Common myeloid progenitor, CD34-positive (primary cell): ENCODE measurements at regions of chr6 and their contacts with region 1.

Region 1: GRCh38 chr6:31597006-31597405 is 4.2 kb upstream of the NCR3 start:
- DNase-seq: peak; percentile 77 to 84 (median 78)
- H3K4me3 ChIP-seq: no peak overlapping the region
- H3K27ac ChIP-seq: no peak overlapping the region
- H3K4me1 ChIP-seq: peaks cover 0 to 40% (median 21%) of the 10 kb centered on the region in 4 experiments
- H3K27me3 ChIP-seq: no peaks in the 10 kb centered on the region

Region 2: DNA sequence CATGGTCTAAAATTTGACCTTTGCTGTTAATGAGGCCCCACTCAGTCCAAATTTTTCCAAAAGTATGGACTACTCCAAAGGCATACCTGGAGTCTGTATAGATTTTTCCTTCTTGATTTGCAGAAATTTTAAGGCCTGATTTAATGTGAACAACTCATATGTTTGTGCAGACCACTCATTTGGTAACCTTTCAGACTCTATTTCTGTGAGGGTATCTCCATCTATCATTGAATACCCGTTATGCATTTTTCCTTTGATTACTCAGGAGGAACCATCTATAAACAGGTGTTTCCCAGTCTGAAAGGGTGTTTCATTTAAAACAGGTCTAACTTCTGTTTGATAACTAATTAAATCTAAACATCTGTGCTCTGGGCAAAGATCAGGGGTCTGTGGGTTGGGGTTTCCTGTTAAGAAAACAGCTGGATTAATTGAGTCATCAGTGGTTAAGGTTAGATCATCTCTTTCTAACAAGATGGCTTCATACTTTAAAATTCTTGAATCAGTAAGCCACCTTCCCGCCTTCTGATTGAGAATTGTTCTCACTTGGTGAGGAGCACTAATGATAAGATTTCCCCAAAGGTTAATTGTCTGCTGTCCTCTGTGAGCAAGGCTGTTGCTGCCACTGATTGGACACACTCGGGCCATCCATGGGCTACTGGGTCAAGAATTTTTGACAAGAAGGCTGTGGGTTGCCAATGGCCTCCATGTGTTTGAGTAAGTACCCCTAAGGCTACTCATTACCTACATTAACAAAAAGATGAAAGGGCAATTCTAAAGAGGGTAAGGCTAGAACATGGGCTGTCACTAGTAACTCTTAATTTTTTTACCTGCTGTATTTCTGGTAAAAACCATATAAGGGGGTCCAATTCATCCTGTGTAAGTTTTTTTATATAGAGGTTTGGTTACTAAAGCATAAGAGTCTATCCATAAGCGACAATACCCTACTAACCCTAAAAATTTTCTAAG is 264.1 kb before region 1 on chr6:
- CTCF ChIA-PET with region 1: no interaction called
- POLR2A ChIA-PET with region 1: no interaction called
- DNase-seq: peak; percentile 63 to 96 (median 64)
- H3K4me3 ChIP-seq: no peak overlapping the region
- H3K27ac ChIP-seq: no peak overlapping the region
- H3K4me1 ChIP-seq: peaks cover 0 to 9% (median 2%) of the 10 kb centered on the region in 4 experiments
- H3K27me3 ChIP-seq: no peaks in the 10 kb centered on the region

Region 3: GRCh38 chr6:31541658-31542521 is 55.1 kb before region 1 on chr6 and contains the start of gene DDX39B:
- CTCF ChIA-PET with region 1: interaction called, 483 read pairs
- POLR2A ChIA-PET with region 1: no interaction called
- DNase-seq: peak; percentile 98 to 99 (median 99)
- H3K4me3 ChIP-seq: peak within 1 kb of the TSS; percentile 66 to 97 (median 91)
- H3K27ac ChIP-seq: peak within 1 kb of the TSS; percentile 99 to 100
- H3K4me1 ChIP-seq: peaks cover 17 to 47% (median 40%) of the 10 kb centered on the region in 4 experiments
- H3K27me3 ChIP-seq: no peaks in the 10 kb centered on the region

Region 4: GRCh38 chr6:31546962-31547726 is 49.9 kb before region 1 on chr6 and contains the start of gene NFKBIL1:
- CTCF ChIA-PET with region 1: interaction called, 483 read pairs
- POLR2A ChIA-PET with region 1: interaction called, 10 read pairs
- DNase-seq: peak; percentile 90 to 97 (median 91)
- H3K4me3 ChIP-seq: peak within 1 kb of the TSS in 6 of 7 experiments; percentile 60 to 81 (median 72)
- H3K27ac ChIP-seq: peak within 1 kb of the TSS; percentile 74 to 91
- H3K4me1 ChIP-seq: peaks cover 9 to 49% (median 31%) of the 10 kb centered on the region in 4 experiments
- H3K27me3 ChIP-seq: no peaks in the 10 kb centered on the region

Region 5: DNA sequence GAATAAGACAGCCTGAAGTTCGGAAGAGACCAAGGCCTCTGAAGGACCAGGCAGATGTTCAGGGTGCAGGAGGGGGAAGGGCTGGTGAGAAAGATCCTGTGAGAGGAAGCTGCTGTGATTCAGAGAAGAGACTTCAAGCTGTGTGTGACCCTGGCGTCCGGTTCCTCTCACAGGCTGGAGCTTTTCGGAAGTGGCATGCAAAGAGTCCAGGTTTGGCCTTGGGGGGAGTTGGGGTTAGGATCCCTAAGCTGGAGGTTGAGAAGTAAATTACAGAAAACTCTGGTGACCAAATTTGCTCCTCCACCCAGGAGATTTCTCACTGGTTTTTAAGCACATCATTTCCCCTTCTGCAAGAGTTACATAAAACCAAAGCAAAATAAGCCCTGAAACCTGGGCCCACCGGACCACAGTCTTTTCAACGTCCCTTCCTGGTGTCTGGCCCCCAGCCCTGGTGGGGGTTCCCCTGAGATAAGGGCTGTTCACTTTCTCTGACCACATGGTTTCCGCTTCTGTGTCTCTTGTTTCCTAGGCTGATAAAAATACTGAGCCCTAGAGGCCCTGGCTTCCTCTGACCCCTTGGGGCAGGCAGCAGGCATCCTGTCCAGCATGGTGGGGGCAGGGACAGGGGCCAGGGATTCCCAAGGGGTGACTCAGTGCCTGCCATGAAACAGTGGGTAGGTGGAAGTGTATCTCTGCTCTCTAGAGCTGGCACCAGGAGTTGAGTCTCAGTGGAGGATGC is 36.9 kb before region 1 on chr6:
- CTCF ChIA-PET with region 1: interaction called, 127 read pairs
- POLR2A ChIA-PET with region 1: no interaction called
- DNase-seq: peak; percentile 58 to 91 (median 87)
- H3K4me3 ChIP-seq: peak overlapping the region; percentile 16 to 64 (median 41)
- H3K27ac ChIP-seq: peak overlapping the region in 1 of 2 experiments; percentile 69
- H3K4me1 ChIP-seq: peaks cover 30 to 83% (median 62%) of the 10 kb centered on the region in 4 experiments
- H3K27me3 ChIP-seq: no peaks in the 10 kb centered on the region

Region 6: GRCh38 chr6:31568537-31568961 is 28.5 kb before region 1 on chr6:
- CTCF ChIA-PET with region 1: interaction called, 605 read pairs
- POLR2A ChIA-PET with region 1: no interaction called
- DNase-seq: peak in 2 of 3 donors; percentile 63 to 66
- H3K4me3 ChIP-seq: no peak overlapping the region
- H3K27ac ChIP-seq: no peak overlapping the region
- H3K4me1 ChIP-seq: peaks cover 2 to 35% (median 10%) of the 10 kb centered on the region in 4 experiments
- H3K27me3 ChIP-seq: no peaks in the 10 kb centered on the region

Region 7: GRCh38 chr6:31580807-31581433 is 16.1 kb before region 1 on chr6:
- CTCF ChIA-PET with region 1: interaction called, 605 read pairs
- POLR2A ChIA-PET with region 1: interaction called, 8 read pairs
- DNase-seq: peak; percentile 81 to 86 (median 85)
- H3K4me3 ChIP-seq: peak overlapping the region; percentile 85 to 96 (median 91)
- H3K27ac ChIP-seq: peak overlapping the region; percentile 46 to 83
- H3K4me1 ChIP-seq: peaks cover 12 to 65% (median 57%) of the 10 kb centered on the region in 4 experiments
- H3K27me3 ChIP-seq: no peaks in the 10 kb centered on the region

Region 8: DNA sequence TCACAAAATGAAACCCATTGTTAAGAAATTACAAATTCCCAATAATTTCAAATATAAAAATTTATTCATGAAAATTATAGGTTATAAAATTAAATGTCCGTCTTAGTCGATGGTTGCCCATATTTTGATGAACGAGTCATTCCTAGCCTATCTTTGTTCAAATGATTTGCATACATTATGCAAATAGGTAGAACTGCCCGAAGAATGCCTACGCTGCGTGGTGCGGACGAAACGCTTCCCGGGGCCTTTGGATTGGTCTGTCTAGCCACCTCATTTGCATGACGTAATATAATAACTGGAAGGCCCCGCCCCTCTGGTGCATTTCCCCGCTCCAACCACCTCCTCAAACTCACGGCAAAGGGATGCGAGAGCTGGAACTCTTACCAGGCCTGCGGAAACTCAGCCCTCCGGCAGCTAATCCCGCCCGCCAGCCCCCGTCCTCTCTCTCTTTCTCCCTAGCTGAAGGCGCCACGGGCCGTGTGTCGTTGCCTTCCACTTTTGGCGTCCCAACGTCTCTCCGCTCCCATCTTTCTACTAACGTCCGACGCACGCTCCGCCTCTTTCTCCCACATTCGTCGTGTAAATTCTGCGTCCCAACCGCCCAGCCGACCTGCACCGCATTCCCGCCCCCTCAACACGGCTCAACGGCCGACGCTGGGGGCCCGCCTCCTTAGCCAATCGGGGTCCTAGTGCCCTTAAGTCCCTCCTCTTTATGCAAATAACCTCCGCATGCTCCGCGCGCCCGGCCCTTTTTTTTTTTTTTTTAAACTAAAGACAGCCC is 23.0 kb after region 1 on chr6:
- CTCF ChIA-PET with region 1: interaction called, 142 read pairs
- POLR2A ChIA-PET with region 1: interaction called, 3 read pairs
- DNase-seq: peak; percentile 99 to 100 (median 99)
- H3K4me3 ChIP-seq: peak overlapping the region; percentile 29 to 95 (median 78)
- H3K27ac ChIP-seq: peak overlapping the region; percentile 94 to 97
- H3K4me1 ChIP-seq: peaks cover 25 to 54% (median 47%) of the 10 kb centered on the region in 4 experiments
- H3K27me3 ChIP-seq: no peaks in the 10 kb centered on the region